HEK293T (cell line): ENCODE measurements at regions of chr16 and their contacts with region 1.

Region 1: DNA sequence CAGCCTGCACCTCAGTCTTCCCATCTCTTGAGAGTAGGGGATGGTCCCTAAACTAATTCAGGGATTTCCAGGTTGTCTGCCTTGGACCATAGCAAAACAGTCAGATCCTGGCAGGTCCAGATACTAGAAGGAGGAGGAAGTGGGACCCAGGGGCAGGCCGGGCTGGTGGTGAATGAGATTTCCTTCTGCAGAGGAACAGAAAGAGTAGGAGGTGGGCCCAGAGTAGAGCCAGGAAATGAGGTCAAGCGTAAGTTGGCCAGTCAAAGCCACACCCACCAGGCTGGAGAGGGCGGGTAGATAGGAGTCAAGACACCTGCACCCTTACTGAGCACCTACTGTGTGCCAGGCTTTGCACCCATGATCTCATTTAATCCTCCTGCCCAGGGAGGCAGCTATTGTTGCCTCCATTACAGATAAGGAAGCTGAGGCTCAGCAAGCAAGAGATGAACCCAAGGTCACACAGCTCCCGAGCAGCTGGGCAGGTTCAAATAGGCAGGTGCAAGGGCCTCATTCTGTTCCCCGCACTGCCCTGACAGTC is 2.6 kb downstream of the CDH5 start:
- DNase-seq: no peak

Region 2: DNA sequence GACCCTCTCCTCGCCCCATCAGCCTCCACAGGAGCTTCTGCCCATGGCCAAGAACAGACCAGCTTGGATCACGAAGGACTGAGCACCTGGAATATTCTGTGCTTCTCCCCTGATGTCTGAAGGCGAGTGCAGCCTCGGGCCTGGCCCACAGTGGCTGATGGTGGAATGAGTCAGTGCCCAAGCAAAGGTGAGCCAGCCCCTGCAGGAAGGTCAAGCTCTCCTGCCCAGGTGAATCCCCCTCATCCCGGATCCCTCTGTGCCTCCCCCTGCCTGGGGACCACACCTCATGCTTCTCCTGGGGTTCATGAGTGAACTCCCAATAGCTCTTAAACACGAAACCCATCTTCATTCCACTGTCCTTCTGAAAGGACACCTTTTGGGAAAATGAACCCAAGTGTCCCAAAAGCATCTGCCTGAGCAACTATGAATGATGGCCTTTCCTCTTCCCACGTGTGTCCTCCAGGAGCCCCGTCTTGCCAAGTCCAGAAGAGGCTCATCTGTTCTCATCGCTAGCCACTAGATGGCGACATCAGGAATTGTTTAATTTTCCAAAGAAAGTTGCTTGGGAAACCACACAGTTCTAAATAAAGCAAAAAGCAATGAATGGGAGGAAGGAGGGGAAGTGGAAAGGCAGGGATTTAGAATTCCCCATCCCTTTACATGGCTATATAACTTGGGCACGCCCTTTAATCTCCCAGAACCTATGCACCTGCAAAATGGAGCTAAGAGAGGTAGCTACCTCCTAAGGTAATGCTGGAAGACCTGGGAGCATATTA is 11.8 kb before region 1 on chr16:
- CTCF ChIA-PET with region 1: interaction called, 16 read pairs
- POLR2A ChIA-PET with region 1: no interaction called
- DNase-seq: peak; percentile 73